CD4-positive, alpha-beta memory T cell (primary cell): ENCODE measurements at regions of chr1 and their contacts with region 1.

Region 1: GRCh38 chr1:40373338-40374283 is at the start of gene SMAP2:
- DNase-seq: peak; percentile 94 to 96 (median 96)
- H3K4me3 ChIP-seq: peak within 1 kb of the TSS; percentile 84 to 90
- H3K4me3 Mint-ChIP-seq: peak within 1 kb of the TSS; percentile 98 to 100 (median 99)
- H3K27ac ChIP-seq: peak within 1 kb of the TSS; percentile 96
- H3K27ac Mint-ChIP-seq: peak within 1 kb of the TSS; percentile 97 to 100 (median 99)
- H3K4me1 ChIP-seq: peaks cover 45% of the 10 kb centered on the region
- H3K4me1 Mint-ChIP-seq: peaks cover 31 to 67% (median 49%) of the 10 kb centered on the region in 4 donors
- H3K27me3 ChIP-seq: no peaks in the 10 kb centered on the region
- H3K27me3 Mint-ChIP-seq: peaks cover 0 to 6% of the 10 kb centered on the region in 2 donors
- total RNA-seq, gene SMAP2: 123 TPM

Region 2: DNA sequence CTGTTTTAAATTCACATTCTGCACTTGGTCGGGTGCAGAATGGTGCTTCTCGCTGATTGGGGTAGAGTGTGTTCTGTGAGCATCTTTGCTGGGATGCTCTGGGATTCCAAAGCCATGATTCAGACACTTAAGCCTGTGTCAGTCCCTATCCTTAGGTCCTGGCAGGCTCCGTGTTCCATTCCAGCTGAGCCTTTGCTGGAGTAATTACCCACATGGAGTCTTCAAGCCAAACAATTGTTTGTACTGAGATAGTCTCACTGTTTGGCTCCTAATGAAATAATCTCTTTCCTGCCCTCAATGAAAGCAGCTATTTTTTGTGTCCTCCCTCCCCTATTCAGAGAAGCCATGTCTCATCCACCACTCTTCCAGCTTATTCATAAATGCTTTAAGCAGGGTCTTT is 18.6 kb after region 1 on chr1:
- CTCF ChIA-PET with region 1: interaction called, 56 read pairs
- POLR2A ChIA-PET with region 1: interaction called, 287 read pairs
- intact Hi-C with region 1: no loop called
- DNase-seq: no peak
- H3K4me3 ChIP-seq: peak overlapping the region in 1 of 2 donors; percentile 2
- H3K4me3 Mint-ChIP-seq: peak overlapping the region; percentile 26 to 96 (median 54)
- H3K27ac ChIP-seq: peak overlapping the region; percentile 99
- H3K27ac Mint-ChIP-seq: peak overlapping the region; percentile 82 to 98 (median 96)
- H3K4me1 ChIP-seq: peaks cover 97% of the 10 kb centered on the region
- H3K4me1 Mint-ChIP-seq: peaks cover 78 to 97% (median 88%) of the 10 kb centered on the region in 4 donors
- H3K27me3 ChIP-seq: no peaks in the 10 kb centered on the region
- H3K27me3 Mint-ChIP-seq: no peaks in the 10 kb centered on the region

Region 3: GRCh38 chr1:40454873-40455272 is 81.3 kb after region 1 on chr1:
- CTCF ChIA-PET with region 1: no interaction called
- POLR2A ChIA-PET with region 1: no interaction called
- intact Hi-C with region 1: no loop called
- DNase-seq: no peak
- H3K4me3 ChIP-seq: no peak overlapping the region
- H3K4me3 Mint-ChIP-seq: no peak overlapping the region
- H3K27ac ChIP-seq: no peak overlapping the region
- H3K27ac Mint-ChIP-seq: no peak overlapping the region
- H3K4me1 ChIP-seq: peaks cover 11% of the 10 kb centered on the region
- H3K4me1 Mint-ChIP-seq: peaks cover 13 to 16% (median 15%) of the 10 kb centered on the region in 4 donors
- H3K27me3 ChIP-seq: no peaks in the 10 kb centered on the region
- H3K27me3 Mint-ChIP-seq: no peaks in the 10 kb centered on the region